Dendritic cell treated with granulocyte-macrophage colony-stimulating factor and Interleukin-4, amounts not matched to agents 40 ng/mL and 50 ng/mL, for 4 days (primary cell): ENCODE measurements at regions of chr1 and their contacts with region 1.

Region 1: GRCh38 chr1:198465201-198466144 is 75.0 kb downstream of the ATP6V1G3 start:
- H3K4me3 Mint-ChIP-seq: no peak overlapping the region
- H3K27ac Mint-ChIP-seq: no peak overlapping the region
- H3K4me1 Mint-ChIP-seq: peaks cover 14% of the 10 kb centered on the region
- H3K27me3 Mint-ChIP-seq: no peaks in the 10 kb centered on the region

Region 2: GRCh38 chr1:197521118-197521739 is 944.2 kb before region 1 on chr1:
- intact Hi-C with region 1: loop called (anchors 5 kb)
- H3K4me3 Mint-ChIP-seq: no peak overlapping the region
- H3K27ac Mint-ChIP-seq: no peak overlapping the region
- H3K4me1 Mint-ChIP-seq: no peaks in the 10 kb centered on the region
- H3K27me3 Mint-ChIP-seq: no peaks in the 10 kb centered on the region

Region 3: DNA sequence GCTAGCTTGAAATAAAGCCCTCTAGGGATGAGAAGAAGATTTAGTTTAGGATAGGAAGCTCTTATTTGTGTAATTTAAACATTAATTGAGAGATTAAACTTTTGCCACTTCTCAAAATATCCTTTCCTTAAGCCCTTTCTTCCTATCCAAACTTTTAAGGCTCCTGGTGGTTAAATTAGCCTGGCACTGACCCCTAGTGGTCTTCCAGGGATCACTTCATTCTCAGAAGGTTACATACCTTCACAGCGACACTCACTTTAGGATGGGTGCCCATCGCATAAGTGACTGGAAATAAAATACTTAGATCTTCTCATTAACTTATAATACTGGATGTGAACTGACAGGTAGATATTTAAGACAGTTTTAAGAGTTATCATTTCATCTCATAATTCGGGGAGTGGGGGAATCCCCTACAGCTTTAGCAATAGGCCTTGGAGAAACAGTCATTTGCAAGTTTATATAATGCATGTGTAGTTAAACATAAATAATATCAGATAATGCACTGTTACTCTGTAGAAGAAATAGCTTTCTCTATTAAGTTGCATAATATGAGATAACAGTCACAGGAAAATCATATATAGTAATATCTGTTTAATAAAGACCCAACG is 540.9 kb before region 1 on chr1:
- intact Hi-C with region 1: loop called (anchors 10 kb)
- H3K4me3 Mint-ChIP-seq: no peak overlapping the region
- H3K27ac Mint-ChIP-seq: no peak overlapping the region
- H3K4me1 Mint-ChIP-seq: peaks cover 23% of the 10 kb centered on the region
- H3K27me3 Mint-ChIP-seq: peaks cover 80% of the 10 kb centered on the region

Region 4: GRCh38 chr1:198088360-198089071 is 377.0 kb before region 1 on chr1:
- intact Hi-C with region 1: loop called (anchors 2 kb)
- H3K4me3 Mint-ChIP-seq: no peak overlapping the region
- H3K27ac Mint-ChIP-seq: no peak overlapping the region
- H3K4me1 Mint-ChIP-seq: peaks cover 6% of the 10 kb centered on the region
- H3K27me3 Mint-ChIP-seq: no peaks in the 10 kb centered on the region

Region 5: GRCh38 chr1:198157241-198157846 is 308.1 kb before region 1 on chr1:
- intact Hi-C with region 1: loop called (anchors 10 kb)
- H3K4me3 Mint-ChIP-seq: peak overlapping the region; percentile 93
- H3K27ac Mint-ChIP-seq: peak overlapping the region; percentile 93
- H3K4me1 Mint-ChIP-seq: peaks cover 49% of the 10 kb centered on the region
- H3K27me3 Mint-ChIP-seq: no peaks in the 10 kb centered on the region

Region 6: DNA sequence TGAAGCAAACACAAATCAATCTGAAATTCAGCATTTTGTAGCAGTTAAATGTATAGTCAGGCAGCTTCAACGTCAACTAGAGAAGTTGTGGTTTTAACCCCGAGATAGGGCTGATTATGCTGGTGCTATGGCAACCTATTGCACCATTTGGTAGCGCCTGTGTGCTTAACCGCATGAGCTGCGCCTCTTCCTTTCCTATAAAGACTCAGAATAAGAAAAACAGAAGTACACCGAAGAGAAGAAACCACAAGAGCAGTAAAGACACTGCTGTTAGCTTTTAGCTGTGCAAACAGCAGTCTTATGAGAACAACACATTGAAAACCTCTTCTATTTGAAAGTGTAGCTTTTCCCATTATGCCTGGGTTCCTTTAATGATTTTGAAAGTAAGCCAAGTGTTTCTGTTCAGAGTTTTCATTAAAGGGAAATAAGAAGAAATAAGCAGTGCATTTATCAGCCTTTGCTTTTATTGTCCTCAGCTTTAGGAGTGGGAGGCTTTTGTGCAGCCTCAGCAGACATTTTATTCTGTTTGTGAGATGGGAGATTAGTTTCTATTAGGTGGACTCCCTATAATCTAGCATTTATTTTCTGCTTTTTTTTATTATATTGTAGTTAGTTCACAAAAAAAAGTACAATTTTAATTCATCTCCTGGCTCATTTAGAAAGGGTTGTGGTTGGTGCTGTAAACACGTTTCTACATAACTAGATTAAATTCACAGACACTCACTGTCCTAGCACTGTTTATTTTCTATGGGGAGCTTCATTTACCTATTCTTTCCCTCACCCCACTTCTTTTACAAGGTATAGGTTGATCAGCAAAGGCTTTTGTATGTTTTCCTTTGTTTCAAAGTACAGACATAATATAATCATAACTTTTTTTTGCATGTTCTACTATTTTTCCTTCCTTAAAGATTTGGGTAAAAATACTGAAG is 216.6 kb after region 1 on chr1:
- intact Hi-C with region 1: loop called (anchors 2 kb)
- H3K4me3 Mint-ChIP-seq: peak overlapping the region; percentile 48
- H3K27ac Mint-ChIP-seq: peak overlapping the region; percentile 91
- H3K4me1 Mint-ChIP-seq: peaks cover 19% of the 10 kb centered on the region
- H3K27me3 Mint-ChIP-seq: no peaks in the 10 kb centered on the region